ENCODE measurements at regions of chr6 and their contacts with region 1.

Region 1: DNA sequence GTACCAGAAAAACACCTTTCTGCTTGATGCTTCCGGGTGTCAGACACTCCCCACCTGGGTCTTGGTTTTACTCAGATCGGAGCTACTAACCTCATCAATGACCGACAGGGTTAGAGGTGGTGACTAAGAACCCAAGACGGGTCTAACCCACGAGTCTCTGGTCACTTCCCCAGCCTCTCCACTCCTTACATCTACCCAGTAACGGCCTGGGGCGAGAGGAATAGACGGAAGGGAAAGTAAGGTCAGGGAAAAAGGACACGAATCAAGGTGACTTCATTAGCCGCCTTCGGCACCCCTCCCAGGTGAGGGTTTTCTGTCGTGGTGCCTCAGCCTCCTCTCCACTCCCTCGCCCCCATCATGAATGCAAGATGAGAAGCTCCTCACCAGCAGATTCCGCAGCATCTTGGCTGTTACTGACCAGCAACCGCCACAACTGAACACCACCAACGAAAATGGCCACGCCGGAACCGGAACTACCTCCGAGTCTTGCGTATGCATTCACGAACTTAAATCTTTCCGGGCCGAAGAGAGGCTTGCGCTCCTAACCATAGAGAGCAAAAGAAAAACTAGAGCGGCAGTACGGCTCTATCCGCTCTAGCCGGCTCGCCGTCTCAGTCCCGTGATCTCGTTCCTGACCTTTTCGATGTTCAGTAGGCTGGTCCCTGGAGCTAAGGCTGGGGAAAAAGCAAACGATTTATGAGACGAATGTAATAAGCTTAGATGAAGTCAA is at the start of gene COX7A2:
- DNase-seq: peak; percentile 86
- ATAC-seq: peak; percentile 94
- H3K4me3 ChIP-seq: peak within 1 kb of the TSS; percentile 65
- H3K27ac ChIP-seq: peak within 1 kb of the TSS; percentile 97
- H3K4me1 ChIP-seq: no peaks in the 10 kb centered on the region
- H3K27me3 ChIP-seq: no peaks in the 10 kb centered on the region
- CTCF ChIP-seq: no peak
- EP300 ChIP-seq: no peak; a peak in 3 of 4 replicates
- POLR2A ChIP-seq: peak; percentile 97
- RAD21 ChIP-seq: no peak
- polyA plus RNA-seq, gene COX7A2: 1,615 to 1,834 TPM

Region 2: GRCh38 chr6:73443555-73443954 is 1799.9 kb before region 1 on chr6:
- CTCF ChIA-PET with region 1: no interaction called
- POLR2A ChIA-PET with region 1: no interaction called
- RAD21 ChIA-PET with region 1: no interaction called
- SMC1A ChIA-PET with region 1: no interaction called
- in situ Hi-C with region 1: loop called (anchors 25 kb)
- intact Hi-C with region 1: no loop called
- DNase-seq: no peak
- ATAC-seq: no peak
- H3K4me3 ChIP-seq: no peak overlapping the region
- H3K27ac ChIP-seq: no peak overlapping the region
- H3K4me1 ChIP-seq: peaks cover 15% of the 10 kb centered on the region
- H3K27me3 ChIP-seq: no peaks in the 10 kb centered on the region
- CTCF ChIP-seq: no peak
- EP300 ChIP-seq: no peak
- POLR2A ChIP-seq: no peak
- RAD21 ChIP-seq: no peak

Region 3: GRCh38 chr6:75275067-75275466 is 31.6 kb after region 1 on chr6:
- CTCF ChIA-PET with region 1: interaction called, 4 read pairs
- POLR2A ChIA-PET with region 1: interaction called, 5 read pairs
- RAD21 ChIA-PET with region 1: interaction called, 6 read pairs
- SMC1A ChIA-PET with region 1: interaction called, 10 read pairs
- in situ Hi-C with region 1: no loop called
- intact Hi-C with region 1: no loop called
- DNase-seq: no peak
- ATAC-seq: no peak
- H3K4me3 ChIP-seq: no peak overlapping the region
- H3K27ac ChIP-seq: no peak overlapping the region
- H3K4me1 ChIP-seq: no peaks in the 10 kb centered on the region
- H3K27me3 ChIP-seq: no peaks in the 10 kb centered on the region
- CTCF ChIP-seq: no peak
- EP300 ChIP-seq: no peak
- POLR2A ChIP-seq: no peak
- RAD21 ChIP-seq: no peak

Measured in GM12878 (cell line).